ENCODE measurements at regions of chr20 and their contacts with region 1.

Region 1: DNA sequence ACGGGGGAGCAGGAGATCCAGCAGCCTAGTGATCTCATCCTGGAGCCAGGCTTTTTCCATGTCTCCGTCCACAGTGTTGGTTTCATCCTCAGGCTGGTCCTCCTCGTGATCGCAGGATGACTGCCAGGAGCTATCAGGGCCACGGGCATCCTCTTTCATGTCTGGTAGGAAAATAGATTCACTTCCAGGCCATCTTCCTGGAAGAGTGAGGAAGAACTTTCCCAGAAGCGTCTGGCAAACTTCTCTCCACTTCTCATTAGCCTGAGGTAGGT is 15.3 kb upstream of the SLC9A8 start:
- DNase-seq: no peak
- ATAC-seq: no peak
- H3K4me3 ChIP-seq: no peak overlapping the region
- H3K4me3 Mint-ChIP-seq: no peak overlapping the region
- H3K27ac ChIP-seq: no peak overlapping the region
- H3K27ac Mint-ChIP-seq: no peak overlapping the region
- H3K4me1 ChIP-seq: peaks cover 6% of the 10 kb centered on the region in 2 donors
- H3K4me1 Mint-ChIP-seq: peaks cover under 1 to 42% (median 10%) of the 10 kb centered on the region in 7 donors
- H3K27me3 ChIP-seq: no peaks in the 10 kb centered on the region
- H3K27me3 Mint-ChIP-seq: peaks cover 7 to 34% (median 16%) of the 10 kb centered on the region in 5 donors

Region 2: DNA sequence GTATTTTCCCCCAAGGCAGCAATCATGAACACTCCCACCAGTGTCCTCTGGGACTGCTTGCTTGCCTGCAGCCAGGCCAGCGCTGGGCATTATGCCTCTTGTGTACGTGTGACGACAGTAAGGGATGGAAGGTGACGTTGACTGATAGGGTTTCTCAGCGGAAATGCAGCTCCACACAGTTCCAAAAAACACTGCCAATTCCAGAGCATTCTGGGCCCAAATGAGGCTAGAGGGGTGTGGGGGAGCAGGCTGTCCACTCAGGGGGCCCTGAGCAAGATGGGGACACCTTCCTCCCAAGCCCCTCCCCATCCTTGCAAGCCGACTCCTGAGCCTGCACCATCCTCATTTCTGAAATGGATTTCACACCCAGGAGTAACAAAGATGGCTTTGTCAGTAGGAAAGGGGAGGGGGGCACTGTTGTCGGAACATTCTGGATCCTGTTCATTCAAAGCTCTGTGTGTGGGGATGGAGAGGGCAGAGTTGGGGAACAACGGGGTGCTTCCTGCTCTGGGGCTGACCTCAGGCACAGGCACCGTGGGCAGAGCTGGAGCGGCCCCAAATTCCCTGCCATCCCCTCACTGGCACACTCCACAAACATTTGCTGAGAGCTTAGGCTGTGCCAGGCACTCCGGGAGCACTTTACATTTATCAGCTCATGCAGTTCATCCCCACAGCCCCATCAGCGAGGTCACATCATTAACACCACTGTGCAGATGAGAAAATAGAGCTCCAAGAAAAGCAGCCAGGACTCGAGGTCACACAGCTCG is 989.4 kb before region 1 on chr20:
- CTCF ChIA-PET with region 1: no interaction called
- POLR2A ChIA-PET with region 1: no interaction called
- intact Hi-C with region 1: no loop called
- DNase-seq: peak in 1 of 9 donors; percentile 2
- ATAC-seq: no peak
- H3K4me3 ChIP-seq: no peak overlapping the region
- H3K4me3 Mint-ChIP-seq: peak overlapping the region in 1 of 10 donors; percentile 25
- H3K27ac ChIP-seq: no peak overlapping the region
- H3K27ac Mint-ChIP-seq: peak overlapping the region in 1 of 9 donors; percentile 88
- H3K4me1 ChIP-seq: peaks cover 10 to 48% of the 10 kb centered on the region in 2 donors
- H3K4me1 Mint-ChIP-seq: peaks cover 0 to 44% (median 6%) of the 10 kb centered on the region in 7 donors
- H3K27me3 ChIP-seq: no peaks in the 10 kb centered on the region
- H3K27me3 Mint-ChIP-seq: no peaks in the 10 kb centered on the region

Region 3: DNA sequence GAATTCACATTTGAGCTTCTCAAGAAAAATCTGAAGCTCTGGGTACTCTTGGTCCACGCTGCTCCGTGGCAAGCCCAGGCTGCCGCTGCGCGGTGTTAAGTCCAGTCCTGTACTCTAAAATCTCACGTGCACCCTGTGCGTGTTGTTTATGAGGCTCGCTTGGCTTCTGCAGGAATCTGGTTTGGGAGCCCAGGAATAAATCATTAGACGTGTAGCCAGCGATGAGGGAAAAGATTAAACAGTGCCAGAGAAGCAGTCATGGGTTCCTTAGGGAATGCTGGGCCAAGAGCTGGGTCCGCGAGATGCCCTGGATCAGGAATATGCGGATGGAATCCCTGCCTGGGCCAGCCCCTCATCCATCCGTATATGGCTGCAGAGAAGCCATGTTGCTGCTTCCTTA is 402.1 kb before region 1 on chr20:
- CTCF ChIA-PET with region 1: no interaction called
- POLR2A ChIA-PET with region 1: no interaction called
- intact Hi-C with region 1: no loop called
- DNase-seq: no peak
- ATAC-seq: no peak
- H3K4me3 ChIP-seq: no peak overlapping the region
- H3K4me3 Mint-ChIP-seq: no peak overlapping the region
- H3K27ac ChIP-seq: no peak overlapping the region
- H3K27ac Mint-ChIP-seq: no peak overlapping the region
- H3K4me1 ChIP-seq: no peaks in the 10 kb centered on the region
- H3K4me1 Mint-ChIP-seq: no peaks in the 10 kb centered on the region
- H3K27me3 ChIP-seq: no peaks in the 10 kb centered on the region
- H3K27me3 Mint-ChIP-seq: peaks cover 18 to 29% (median 24%) of the 10 kb centered on the region in 5 donors

Region 4: DNA sequence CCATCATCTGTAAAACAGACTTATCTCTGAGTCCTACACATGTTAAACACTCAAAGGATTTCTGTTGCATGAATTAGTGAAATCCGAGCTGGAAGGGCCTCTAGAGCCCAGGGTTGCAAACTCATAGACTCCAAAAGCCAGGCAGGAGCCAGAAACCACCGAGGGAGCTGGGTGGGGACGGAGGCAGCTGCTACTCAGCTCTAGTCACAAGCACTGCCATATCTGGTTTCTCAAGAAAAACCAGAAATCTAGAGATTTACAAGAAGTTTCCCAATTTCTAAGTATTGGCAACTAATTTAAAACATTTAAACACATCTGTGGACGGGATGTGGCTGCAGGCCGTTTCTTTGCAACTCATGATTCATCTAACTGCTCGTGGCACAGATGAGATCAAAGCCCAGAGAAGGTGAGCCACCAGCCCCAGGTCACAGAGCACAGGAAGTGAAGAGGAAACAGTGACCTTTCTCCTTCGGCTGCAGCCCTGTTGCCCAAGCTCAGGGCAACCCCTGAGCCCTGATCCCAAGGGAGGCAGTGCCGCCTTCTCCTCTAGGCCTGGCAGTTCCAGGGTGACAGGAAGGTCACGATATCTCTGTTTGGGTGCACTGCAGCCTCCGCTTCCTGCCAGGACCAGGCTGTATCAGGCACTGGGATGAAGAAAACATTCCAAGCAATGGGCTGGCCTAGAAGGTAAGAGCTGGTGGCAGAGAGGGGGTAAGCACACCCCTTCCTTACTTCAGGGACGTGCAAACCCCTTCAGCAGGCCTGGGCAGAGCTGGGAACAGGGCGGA is 202.9 kb before region 1 on chr20:
- CTCF ChIA-PET with region 1: no interaction called
- POLR2A ChIA-PET with region 1: no interaction called
- intact Hi-C with region 1: loop called in 1 of 2 experiments (anchors 5 kb)
- DNase-seq: peak in 1 of 9 donors; percentile 76
- ATAC-seq: no peak
- H3K4me3 ChIP-seq: no peak overlapping the region
- H3K4me3 Mint-ChIP-seq: peak overlapping the region in 1 of 10 donors; percentile 85
- H3K27ac ChIP-seq: no peak overlapping the region
- H3K27ac Mint-ChIP-seq: peak overlapping the region in 1 of 9 donors; percentile 97
- H3K4me1 ChIP-seq: peaks cover 0 to 38% of the 10 kb centered on the region in 2 donors
- H3K4me1 Mint-ChIP-seq: peaks cover 0 to 86% (median 4%) of the 10 kb centered on the region in 7 donors
- H3K27me3 ChIP-seq: no peaks in the 10 kb centered on the region
- H3K27me3 Mint-ChIP-seq: peaks cover 0 to 13% (median 4%) of the 10 kb centered on the region in 5 donors

Region 5: GRCh38 chr20:49657118-49657901 is 140.0 kb before region 1 on chr20:
- CTCF ChIA-PET with region 1: no interaction called
- POLR2A ChIA-PET with region 1: no interaction called
- intact Hi-C with region 1: no loop called
- DNase-seq: no peak
- ATAC-seq: no peak
- H3K4me3 ChIP-seq: no peak overlapping the region
- H3K4me3 Mint-ChIP-seq: no peak overlapping the region
- H3K27ac ChIP-seq: no peak overlapping the region
- H3K27ac Mint-ChIP-seq: peak overlapping the region in 1 of 9 donors; percentile 20
- H3K4me1 ChIP-seq: peaks cover 0 to 6% of the 10 kb centered on the region in 2 donors
- H3K4me1 Mint-ChIP-seq: peaks cover 0 to 16% (median 0%) of the 10 kb centered on the region in 7 donors
- H3K27me3 ChIP-seq: no peaks in the 10 kb centered on the region
- H3K27me3 Mint-ChIP-seq: no peaks in the 10 kb centered on the region

Region 6: GRCh38 chr20:49823152-49823847 is 26.0 kb after region 1 on chr20:
- CTCF ChIA-PET with region 1: no interaction called
- POLR2A ChIA-PET with region 1: no interaction called
- intact Hi-C with region 1: loop called in 1 of 2 experiments (anchors 1 kb)
- DNase-seq: peak in 7 of 9 donors; percentile 43 to 79 (median 64)
- ATAC-seq: peak; percentile 93
- H3K4me3 ChIP-seq: no peak overlapping the region
- H3K4me3 Mint-ChIP-seq: peak overlapping the region; percentile 45 to 83 (median 64)
- H3K27ac ChIP-seq: peak overlapping the region; percentile 54
- H3K27ac Mint-ChIP-seq: peak overlapping the region; percentile 29 to 92 (median 82)
- H3K4me1 ChIP-seq: peaks cover 25 to 27% of the 10 kb centered on the region in 2 donors
- H3K4me1 Mint-ChIP-seq: peaks cover 35 to 59% (median 55%) of the 10 kb centered on the region in 7 donors
- H3K27me3 ChIP-seq: no peaks in the 10 kb centered on the region
- H3K27me3 Mint-ChIP-seq: no peaks in the 10 kb centered on the region

Region 7: GRCh38 chr20:51760905-51761546 is 1963.7 kb after region 1 on chr20:
- CTCF ChIA-PET with region 1: no interaction called
- POLR2A ChIA-PET with region 1: no interaction called
- intact Hi-C with region 1: no loop called
- DNase-seq: no peak
- ATAC-seq: no peak
- H3K4me3 ChIP-seq: no peak overlapping the region
- H3K4me3 Mint-ChIP-seq: no peak overlapping the region
- H3K27ac ChIP-seq: no peak overlapping the region
- H3K27ac Mint-ChIP-seq: no peak overlapping the region
- H3K4me1 ChIP-seq: no peaks in the 10 kb centered on the region
- H3K4me1 Mint-ChIP-seq: no peaks in the 10 kb centered on the region
- H3K27me3 ChIP-seq: no peaks in the 10 kb centered on the region
- H3K27me3 Mint-ChIP-seq: peaks cover 1 to 33% (median 9%) of the 10 kb centered on the region in 5 donors